ENCODE measurements at regions of chr1 and their contacts with region 1.

Region 1: DNA sequence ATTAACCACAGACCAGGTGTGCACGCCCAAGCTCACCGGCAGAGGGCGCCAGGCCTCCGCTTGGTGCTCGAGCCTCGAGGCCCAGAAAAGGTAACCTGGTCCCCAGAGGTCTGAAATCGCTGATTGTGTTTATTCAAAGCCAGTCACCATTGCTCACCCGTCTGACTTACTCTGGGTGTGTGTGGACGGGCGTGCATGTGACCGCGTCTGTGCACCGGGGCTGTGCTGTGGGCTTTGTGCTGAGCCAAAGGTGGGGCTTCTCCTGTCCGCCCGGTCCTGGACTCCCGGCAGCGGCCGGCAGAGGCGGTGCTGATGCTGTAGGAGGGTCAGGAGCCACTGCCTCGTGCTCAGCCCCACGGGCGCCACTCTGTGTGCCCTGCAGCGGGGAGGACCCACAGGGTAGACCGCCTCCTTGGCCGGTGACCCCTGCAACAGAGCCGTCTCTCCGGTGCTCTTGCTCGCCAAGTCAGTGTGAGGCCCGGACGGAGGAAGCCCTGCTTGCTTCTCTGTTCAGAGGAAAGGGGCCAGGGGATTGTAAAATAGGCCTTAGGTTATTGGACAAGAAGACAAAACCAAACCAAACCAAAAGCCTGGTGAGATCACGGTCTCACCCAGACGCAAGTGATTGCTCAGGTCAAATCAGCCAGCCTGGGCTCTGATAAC is 32.0 kb upstream of the BTG2 start:
- DNase-seq: peak; percentile 88 to 91 (median 89)
- H3K4me3 ChIP-seq: peak overlapping the region in 1 of 2 donors; percentile 27
- H3K4me3 Mint-ChIP-seq: peak overlapping the region; percentile 39 to 74 (median 66)
- H3K27ac ChIP-seq: peak overlapping the region; percentile 46
- H3K27ac Mint-ChIP-seq: peak overlapping the region; percentile 40 to 94 (median 86)
- H3K4me1 ChIP-seq: peaks cover 62% of the 10 kb centered on the region
- H3K4me1 Mint-ChIP-seq: peaks cover 22 to 60% (median 44%) of the 10 kb centered on the region in 4 donors
- H3K27me3 ChIP-seq: no peaks in the 10 kb centered on the region
- H3K27me3 Mint-ChIP-seq: no peaks in the 10 kb centered on the region

Region 2: GRCh38 chr1:203290261-203291089 is 17.1 kb after region 1 on chr1:
- CTCF ChIA-PET with region 1: interaction called, 178 read pairs
- POLR2A ChIA-PET with region 1: interaction called, 321 read pairs
- intact Hi-C with region 1: loop called (anchors 1 kb)
- DNase-seq: peak; percentile 96 to 98 (median 97)
- H3K4me3 ChIP-seq: peak overlapping the region; percentile 11 to 65
- H3K4me3 Mint-ChIP-seq: peak overlapping the region; percentile 75 to 89 (median 84)
- H3K27ac ChIP-seq: peak overlapping the region; percentile 97
- H3K27ac Mint-ChIP-seq: peak overlapping the region; percentile 98 to 100 (median 100)
- H3K4me1 ChIP-seq: peaks cover 61% of the 10 kb centered on the region
- H3K4me1 Mint-ChIP-seq: peaks cover 48 to 69% (median 58%) of the 10 kb centered on the region in 4 donors
- H3K27me3 ChIP-seq: no peaks in the 10 kb centered on the region
- H3K27me3 Mint-ChIP-seq: no peaks in the 10 kb centered on the region

Region 3: DNA sequence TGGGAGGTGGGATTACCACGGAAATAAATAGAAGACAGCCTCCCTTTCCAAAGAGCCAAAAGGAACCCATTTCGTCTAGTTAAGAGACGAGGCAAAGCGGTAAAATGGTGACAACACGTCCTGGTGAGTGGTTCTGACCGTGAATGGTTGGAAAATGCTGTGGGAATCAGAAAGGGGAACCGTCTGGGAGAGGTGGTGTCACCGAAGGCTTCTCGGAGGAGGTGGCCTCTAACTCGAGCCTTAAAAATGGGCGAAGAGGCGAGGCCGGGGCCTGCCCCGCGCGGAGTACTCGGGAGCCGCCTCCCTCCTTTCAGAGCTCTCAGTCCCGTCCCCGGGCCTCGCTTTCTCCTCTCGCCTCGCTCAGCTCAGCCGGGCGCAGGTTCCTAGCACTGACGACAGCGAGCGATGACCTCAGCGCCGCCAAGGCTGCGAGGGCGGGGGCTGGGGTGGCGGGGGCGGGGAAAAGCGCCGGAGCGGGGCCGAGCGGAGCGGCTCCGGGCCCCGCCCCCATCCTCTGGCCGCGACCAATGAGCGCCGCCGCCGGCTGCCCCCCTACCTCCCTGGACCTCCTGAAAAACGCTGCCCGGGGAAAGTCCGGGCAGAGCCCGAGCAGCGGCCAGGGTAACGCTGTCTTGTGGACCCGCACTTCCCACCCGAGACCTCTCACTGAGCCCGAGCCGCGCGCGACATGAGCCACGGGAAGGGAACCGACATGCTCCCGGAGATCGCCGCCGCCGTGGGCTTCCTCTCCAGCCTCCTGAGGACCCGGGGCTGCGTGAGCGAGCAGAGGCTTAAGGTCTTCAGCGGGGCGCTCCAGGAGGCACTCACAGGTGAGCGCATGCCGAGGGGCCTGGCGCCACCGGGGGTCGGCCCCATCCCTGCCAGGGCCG is 31.8 kb after region 1 on chr1 and contains the start of gene BTG2:
- CTCF ChIA-PET with region 1: interaction called, 188 read pairs
- POLR2A ChIA-PET with region 1: interaction called, 261 read pairs
- intact Hi-C with region 1: loop called (anchors 1 kb)
- DNase-seq: peak; percentile 90 to 94 (median 91)
- H3K4me3 ChIP-seq: peak within 1 kb of the TSS; percentile 87 to 95
- H3K4me3 Mint-ChIP-seq: peak within 1 kb of the TSS; percentile 90 to 99 (median 98)
- H3K27ac ChIP-seq: peak within 1 kb of the TSS; percentile 100
- H3K27ac Mint-ChIP-seq: peak within 1 kb of the TSS; percentile 97 to 100 (median 99)
- H3K4me1 ChIP-seq: peaks cover 50% of the 10 kb centered on the region
- H3K4me1 Mint-ChIP-seq: peaks cover 48 to 82% (median 57%) of the 10 kb centered on the region in 4 donors
- H3K27me3 ChIP-seq: no peaks in the 10 kb centered on the region
- H3K27me3 Mint-ChIP-seq: no peaks in the 10 kb centered on the region
- total RNA-seq, gene BTG2: 197 to 201 TPM

Region 4: GRCh38 chr1:203368624-203369451 is 95.5 kb after region 1 on chr1:
- CTCF ChIA-PET with region 1: no interaction called
- POLR2A ChIA-PET with region 1: no interaction called
- intact Hi-C with region 1: no loop called
- DNase-seq: no peak
- H3K4me3 ChIP-seq: no peak overlapping the region
- H3K4me3 Mint-ChIP-seq: no peak overlapping the region
- H3K27ac ChIP-seq: no peak overlapping the region
- H3K27ac Mint-ChIP-seq: no peak overlapping the region
- H3K4me1 ChIP-seq: no peaks in the 10 kb centered on the region
- H3K4me1 Mint-ChIP-seq: no peaks in the 10 kb centered on the region
- H3K27me3 ChIP-seq: no peaks in the 10 kb centered on the region
- H3K27me3 Mint-ChIP-seq: peaks cover 13 to 16% of the 10 kb centered on the region in 2 donors

Region 5: GRCh38 chr1:203480525-203481084 is 207.3 kb after region 1 on chr1:
- CTCF ChIA-PET with region 1: interaction called, 424 read pairs
- POLR2A ChIA-PET with region 1: no interaction called
- intact Hi-C with region 1: no loop called
- DNase-seq: peak; percentile 31 to 55 (median 51)
- H3K4me3 ChIP-seq: no peak overlapping the region
- H3K4me3 Mint-ChIP-seq: no peak overlapping the region
- H3K27ac ChIP-seq: no peak overlapping the region
- H3K27ac Mint-ChIP-seq: peak overlapping the region in 3 of 7 donors; percentile 11 to 65 (median 28)
- H3K4me1 ChIP-seq: peaks cover 7% of the 10 kb centered on the region
- H3K4me1 Mint-ChIP-seq: peaks cover 1 to 9% (median 6%) of the 10 kb centered on the region in 4 donors
- H3K27me3 ChIP-seq: peaks cover 9% of the 10 kb centered on the region
- H3K27me3 Mint-ChIP-seq: peaks cover 6 to 10% of the 10 kb centered on the region in 2 donors